Gastrocnemius medialis (tissue), 4 donors: ENCODE measurements at regions of chr20 and their contacts with region 1.

Region 1: GRCh38 chr20:63009045-63009961 is 2.5 kb upstream of the BHLHE23 start:
- DNase-seq: peak; percentile 9 to 41
- ATAC-seq: peak; percentile 66 to 83
- H3K4me3 ChIP-seq: peak overlapping the region in 2 of 4 donors; percentile 10 to 37
- H3K27ac ChIP-seq: no peak overlapping the region
- H3K4me1 ChIP-seq: peaks cover 5 to 7% of the 10 kb centered on the region in 2 donors
- H3K27me3 ChIP-seq: peaks cover 85 to 94% (median 88%) of the 10 kb centered on the region in 3 donors
- CTCF ChIP-seq: peak; percentile 88 to 98 (median 96)
- POLR2A ChIP-seq: no peak

Region 2: DNA sequence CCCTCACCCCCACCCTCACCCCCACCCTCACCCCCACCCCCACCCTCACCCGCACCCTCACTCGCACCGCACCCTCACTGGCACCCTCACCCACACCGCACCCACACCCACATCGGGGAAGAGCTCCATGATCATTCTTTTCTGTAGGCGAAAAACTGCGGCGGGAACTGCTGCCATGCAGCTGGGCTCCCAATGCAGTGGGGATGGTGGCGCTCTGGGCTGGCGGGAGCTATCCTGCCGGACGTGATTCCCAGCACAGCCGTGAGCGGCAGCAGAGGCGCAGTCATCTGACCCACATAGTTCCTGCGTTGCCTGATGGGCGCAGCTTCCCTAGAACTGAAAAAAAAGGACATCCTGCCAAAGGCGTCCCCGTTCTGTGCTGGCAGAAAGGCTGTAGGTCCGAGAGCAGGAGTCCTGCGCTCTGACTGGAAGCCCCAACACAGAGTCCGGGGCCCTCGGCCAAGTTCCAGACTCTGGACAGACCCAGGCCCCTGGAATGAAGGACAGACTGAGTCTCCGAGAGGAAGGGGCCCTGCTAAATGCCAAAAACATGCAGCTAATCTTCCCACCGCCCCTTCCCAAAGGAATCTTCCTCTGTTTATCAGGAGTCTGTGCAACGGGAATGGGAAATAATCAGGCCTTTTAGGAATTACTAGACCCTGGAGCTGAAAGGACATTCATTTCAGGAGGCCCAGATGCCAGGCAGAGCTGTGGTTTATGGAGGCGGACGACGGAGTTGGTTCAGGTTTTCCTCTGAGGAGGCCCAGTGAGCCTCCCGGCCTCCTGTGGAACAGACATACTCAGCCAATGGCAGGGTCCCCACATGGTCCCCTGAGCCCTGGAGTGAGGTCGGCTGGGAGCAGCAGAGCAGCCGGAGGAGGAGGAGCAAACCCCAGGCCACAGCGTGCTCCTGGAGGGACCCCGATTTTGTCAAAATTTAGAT is 133.6 kb before region 1 on chr20:
- in situ Hi-C with region 1: loop called in 2 of 4 experiments (anchors 5 to 25 kb)
- intact Hi-C with region 1: loop called (anchors 1 kb)
- DNase-seq: peak; percentile 47 to 73
- ATAC-seq: peak; percentile 79 to 84
- H3K4me3 ChIP-seq: peak overlapping the region in 1 of 4 donors; percentile 19
- H3K27ac ChIP-seq: peak overlapping the region; percentile 51 to 78 (median 67)
- H3K4me1 ChIP-seq: peaks cover 16 to 20% of the 10 kb centered on the region in 2 donors
- H3K27me3 ChIP-seq: no peaks in the 10 kb centered on the region
- CTCF ChIP-seq: peak in 4 of 5 experiments; percentile 16 to 57 (median 22)
- POLR2A ChIP-seq: no peak

Region 3: DNA sequence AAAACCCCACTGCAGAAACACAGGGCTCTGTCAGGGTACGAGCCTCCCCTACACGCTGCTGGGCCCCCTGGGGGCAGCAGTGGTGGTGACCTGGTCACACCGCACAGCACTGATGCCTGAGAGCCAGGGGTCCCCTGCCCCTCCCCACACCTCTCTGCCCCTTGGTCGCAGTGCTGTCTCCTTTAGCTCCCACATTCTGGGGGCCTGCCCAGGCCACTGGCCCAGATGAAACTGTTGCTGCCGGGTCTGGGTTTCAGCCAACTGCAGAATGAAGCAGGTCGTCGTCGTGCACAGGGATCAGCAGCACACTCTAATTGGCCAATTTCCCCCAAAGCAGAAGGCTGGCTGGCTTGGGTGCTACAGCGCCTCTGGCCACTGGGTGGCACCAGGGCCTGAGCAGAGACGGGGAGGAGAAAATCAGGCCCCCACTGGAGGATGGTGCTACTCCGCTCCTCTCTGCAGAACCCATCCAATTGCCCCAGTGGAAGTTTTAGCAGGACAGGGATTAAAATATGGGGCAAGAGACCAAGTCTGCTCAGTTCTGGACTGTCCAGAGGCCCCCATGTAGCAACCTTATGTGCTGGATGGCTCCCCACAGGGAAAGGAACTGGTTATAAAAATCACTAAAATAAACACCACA is 109.1 kb before region 1 on chr20:
- in situ Hi-C with region 1: loop called in 3 of 4 experiments (anchors 5 to 25 kb)
- intact Hi-C with region 1: loop called (anchors 1 kb)
- DNase-seq: peak in 1 of 2 donors; percentile 61
- ATAC-seq: peak; percentile 69 to 84
- H3K4me3 ChIP-seq: no peak overlapping the region
- H3K27ac ChIP-seq: no peak overlapping the region
- H3K4me1 ChIP-seq: peaks cover 5 to 12% of the 10 kb centered on the region in 2 donors
- H3K27me3 ChIP-seq: peaks cover 0 to 3% (median 0%) of the 10 kb centered on the region in 3 donors
- CTCF ChIP-seq: peak; percentile 78 to 93 (median 88)
- POLR2A ChIP-seq: no peak

Region 4: DNA sequence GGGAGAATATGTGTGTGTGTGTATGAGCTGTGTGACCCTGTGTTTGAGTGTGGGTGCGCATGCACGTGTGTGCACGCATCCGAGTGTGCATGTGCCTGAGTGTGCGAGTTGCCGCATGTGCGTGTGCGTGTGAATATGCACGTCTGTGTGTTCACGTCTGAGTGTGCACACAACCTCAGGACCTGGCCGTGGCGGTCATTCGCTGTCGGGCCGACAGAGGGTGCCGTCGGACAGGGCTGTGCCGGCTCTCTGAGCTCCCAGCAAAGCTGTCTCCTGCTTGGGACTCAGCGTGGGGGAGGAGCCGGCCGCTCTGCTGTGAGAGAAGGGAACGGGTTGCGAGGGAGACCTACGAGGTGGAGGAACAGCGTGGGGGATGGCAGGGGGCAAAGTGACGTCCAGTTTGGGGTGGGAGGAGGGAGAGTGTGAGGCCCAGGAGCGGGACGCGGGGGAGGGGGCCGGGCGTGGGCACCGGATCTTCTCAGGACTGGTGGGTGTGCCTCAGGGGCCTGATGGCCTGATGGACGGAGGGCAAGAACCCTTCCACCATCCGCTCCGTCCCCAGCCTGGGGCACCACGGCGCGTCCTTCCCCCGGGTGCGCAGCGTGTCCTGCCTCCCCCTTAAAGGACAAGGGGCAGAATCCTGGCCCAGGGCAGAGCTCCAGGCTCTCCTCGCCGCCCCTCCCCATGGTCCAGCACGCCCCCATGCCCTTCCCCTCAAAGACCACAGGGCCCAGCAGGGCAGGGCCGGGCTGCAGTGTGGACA is 36.9 kb before region 1 on chr20:
- in situ Hi-C with region 1: no loop called
- intact Hi-C with region 1: loop called (anchors 1 kb)
- DNase-seq: peak; percentile 68 to 70
- ATAC-seq: peak; percentile 89
- H3K4me3 ChIP-seq: peak overlapping the region in 2 of 4 donors; percentile 37 to 40
- H3K27ac ChIP-seq: no peak overlapping the region
- H3K4me1 ChIP-seq: peaks cover 0 to 4% of the 10 kb centered on the region in 2 donors
- H3K27me3 ChIP-seq: peaks cover 57 to 67% (median 58%) of the 10 kb centered on the region in 3 donors
- CTCF ChIP-seq: peak; percentile 75 to 90 (median 87)
- POLR2A ChIP-seq: no peak

Region 5: DNA sequence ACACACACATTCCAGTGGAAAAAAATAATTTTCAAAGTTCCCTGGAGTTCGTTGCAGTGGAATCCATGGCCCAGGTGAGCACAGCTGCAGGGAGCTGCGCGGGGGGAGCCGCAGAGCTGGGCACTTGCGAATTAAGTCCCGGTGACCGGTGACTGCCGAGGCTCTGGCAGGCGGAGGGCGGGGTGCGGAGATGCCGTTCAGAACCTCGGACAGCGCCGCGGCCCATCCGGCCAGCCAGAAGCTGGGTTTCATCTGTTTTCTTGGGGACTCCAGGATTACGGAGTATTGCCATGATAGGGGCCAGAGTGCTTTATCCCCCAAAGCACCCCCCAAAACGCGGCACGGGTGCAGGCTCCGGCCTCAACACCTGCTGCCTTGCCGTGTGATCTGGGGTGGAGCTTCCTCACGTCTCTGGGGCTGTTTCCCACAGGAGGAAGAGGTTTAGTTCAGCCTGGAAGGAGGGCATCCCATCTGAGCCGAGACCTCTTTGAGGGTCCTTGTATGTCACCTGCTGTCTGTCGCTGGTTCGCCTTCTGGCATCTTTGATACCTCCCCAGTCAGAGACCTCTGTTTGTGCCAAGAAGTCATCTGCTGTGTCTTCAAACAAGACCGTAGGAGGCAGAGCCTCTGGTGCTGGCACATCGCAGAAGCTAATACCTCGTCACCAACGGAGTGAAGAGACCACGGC is 107.3 kb after region 1 on chr20:
- in situ Hi-C with region 1: no loop called
- intact Hi-C with region 1: no loop called
- DNase-seq: no peak
- ATAC-seq: no peak
- H3K4me3 ChIP-seq: no peak overlapping the region
- H3K27ac ChIP-seq: no peak overlapping the region
- H3K4me1 ChIP-seq: no peaks in the 10 kb centered on the region
- H3K27me3 ChIP-seq: peaks cover 2 to 36% (median 34%) of the 10 kb centered on the region in 3 donors
- CTCF ChIP-seq: no peak
- POLR2A ChIP-seq: no peak